ENCODE measurements at regions of chr9 and their contacts with region 1.

Region 1: GRCh38 chr9:78296893-78297671 is at the start of gene PSAT1:
- DNase-seq: peak; percentile 90 to 91
- H3K4me3 ChIP-seq: peak within 1 kb of the TSS; percentile 87 to 93 (median 90)
- H3K27ac ChIP-seq: peak within 1 kb of the TSS; percentile 94
- H3K4me1 ChIP-seq: peaks cover 8 to 16% (median 12%) of the 10 kb centered on the region in 4 experiments; a peak in 6 of 7 replicates
- H3K27me3 ChIP-seq: no peaks in the 10 kb centered on the region
- CTCF ChIP-seq: no peak
- EP300 ChIP-seq: no peak
- POLR2A ChIP-seq: peak; percentile 95 to 98
- RAD21 ChIP-seq: no peak
- total RNA-seq, gene PSAT1: 317 and 341 TPM in 2 replicates

Region 2: GRCh38 chr9:78035383-78035993 is 261.6 kb before region 1 on chr9:
- CTCF ChIA-PET with region 1: no interaction called
- POLR2A ChIA-PET with region 1: interaction called, 10 read pairs
- DNase-seq: no peak
- H3K4me3 ChIP-seq: no peak overlapping the region
- H3K27ac ChIP-seq: no peak overlapping the region
- H3K4me1 ChIP-seq: peaks cover 0 to 5% (median 0%) of the 10 kb centered on the region in 4 experiments; a peak in 3 of 7 replicates
- H3K27me3 ChIP-seq: no peaks in the 10 kb centered on the region
- CTCF ChIP-seq: peak; percentile 16 to 76 (median 74)
- EP300 ChIP-seq: no peak
- POLR2A ChIP-seq: no peak
- RAD21 ChIP-seq: peak; percentile 79 to 88

Region 3: DNA sequence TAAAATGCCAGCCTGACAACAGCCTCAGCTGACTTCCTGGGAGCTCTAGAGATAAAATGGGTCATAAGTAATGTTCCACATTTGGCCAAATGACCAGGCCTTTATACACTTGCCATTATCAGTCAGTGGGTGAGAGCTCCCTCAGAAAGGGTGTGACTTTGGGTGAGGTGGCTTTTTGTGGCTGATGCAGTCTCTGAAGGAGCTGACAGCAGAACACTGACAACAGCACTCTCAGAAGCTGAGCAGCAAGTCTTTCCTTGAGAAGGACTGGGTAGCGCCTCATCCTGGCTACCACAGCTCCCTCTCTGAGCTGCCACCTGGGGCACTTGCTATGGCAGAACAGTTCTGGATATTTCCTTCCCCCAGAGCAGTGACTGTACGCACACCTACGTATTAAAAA is 243.5 kb before region 1 on chr9:
- CTCF ChIA-PET with region 1: no interaction called
- POLR2A ChIA-PET with region 1: no interaction called
- DNase-seq: no peak
- H3K4me3 ChIP-seq: no peak overlapping the region
- H3K27ac ChIP-seq: no peak overlapping the region
- H3K4me1 ChIP-seq: no peaks in the 10 kb centered on the region
- H3K27me3 ChIP-seq: no peaks in the 10 kb centered on the region
- CTCF ChIP-seq: no peak
- EP300 ChIP-seq: no peak
- POLR2A ChIP-seq: no peak
- RAD21 ChIP-seq: no peak

Region 4: GRCh38 chr9:78248635-78249034 is 48.4 kb before region 1 on chr9:
- CTCF ChIA-PET with region 1: no interaction called
- POLR2A ChIA-PET with region 1: interaction called, 10 read pairs
- DNase-seq: no peak
- H3K4me3 ChIP-seq: no peak overlapping the region
- H3K27ac ChIP-seq: no peak overlapping the region
- H3K4me1 ChIP-seq: no peaks in the 10 kb centered on the region
- H3K27me3 ChIP-seq: no peaks in the 10 kb centered on the region
- CTCF ChIP-seq: no peak
- EP300 ChIP-seq: no peak
- POLR2A ChIP-seq: no peak
- RAD21 ChIP-seq: no peak

Region 5: DNA sequence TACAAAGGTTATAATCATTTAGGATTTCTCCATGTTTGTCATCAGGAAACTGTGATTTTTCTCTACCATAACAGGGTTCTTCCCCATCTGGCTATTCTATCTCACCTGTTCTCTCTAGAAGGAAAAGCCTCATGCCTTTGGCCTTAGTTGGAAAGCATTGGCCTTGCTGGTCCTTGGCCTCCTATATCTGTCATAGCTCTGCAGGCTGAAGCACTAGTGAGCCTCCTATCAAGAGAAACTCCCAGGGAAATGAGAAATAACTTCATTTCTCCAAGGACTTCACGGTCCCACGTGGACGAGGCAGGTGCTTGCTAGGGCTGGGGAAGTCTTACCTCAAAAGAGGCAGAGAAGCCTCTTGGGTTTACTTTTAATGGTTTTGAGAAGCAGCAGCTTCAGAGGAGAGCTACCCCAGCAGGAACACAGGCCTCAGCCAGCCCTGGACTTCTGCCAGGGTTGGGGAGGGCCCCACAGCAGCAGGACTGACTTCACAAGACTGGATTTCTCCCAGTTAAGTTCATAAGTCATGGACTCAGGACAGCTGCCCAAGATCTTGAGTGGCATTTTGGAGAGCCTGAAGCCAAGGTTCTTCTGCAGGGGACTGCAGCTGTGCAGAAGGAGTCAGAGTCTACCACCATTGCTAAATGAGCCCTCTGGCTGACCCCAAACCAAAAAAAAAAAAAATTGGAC is 16.0 kb before region 1 on chr9:
- CTCF ChIA-PET with region 1: interaction called, 21 read pairs
- POLR2A ChIA-PET with region 1: interaction called, 522 read pairs
- DNase-seq: no peak
- H3K4me3 ChIP-seq: no peak overlapping the region
- H3K27ac ChIP-seq: no peak overlapping the region
- H3K4me1 ChIP-seq: no peaks in the 10 kb centered on the region
- H3K27me3 ChIP-seq: no peaks in the 10 kb centered on the region
- CTCF ChIP-seq: no peak
- EP300 ChIP-seq: no peak
- POLR2A ChIP-seq: no peak
- RAD21 ChIP-seq: no peak

Region 6: GRCh38 chr9:78314953-78315870 is 18.1 kb after region 1 on chr9:
- CTCF ChIA-PET with region 1: interaction called, 7 read pairs
- POLR2A ChIA-PET with region 1: interaction called, 936 read pairs
- DNase-seq: peak in 1 of 2 experiments; percentile 35
- H3K4me3 ChIP-seq: no peak overlapping the region
- H3K27ac ChIP-seq: no peak overlapping the region; the same call in 1 of the 2 replicates
- H3K4me1 ChIP-seq: no peaks in the 10 kb centered on the region
- H3K27me3 ChIP-seq: no peaks in the 10 kb centered on the region
- CTCF ChIP-seq: no peak
- EP300 ChIP-seq: no peak
- POLR2A ChIP-seq: peak in 1 of 2 experiments; percentile 28; a peak in 1 of 3 replicates
- RAD21 ChIP-seq: no peak

Region 7: GRCh38 chr9:78369639-78370219 is 72.6 kb after region 1 on chr9:
- CTCF ChIA-PET with region 1: interaction called, 6 read pairs
- POLR2A ChIA-PET with region 1: interaction called, 17 read pairs
- DNase-seq: peak; percentile 54 to 93
- H3K4me3 ChIP-seq: no peak overlapping the region
- H3K27ac ChIP-seq: no peak overlapping the region
- H3K4me1 ChIP-seq: peaks cover 0 to 7% (median 0%) of the 10 kb centered on the region in 4 experiments; a peak in 1 of 7 replicates
- H3K27me3 ChIP-seq: no peaks in the 10 kb centered on the region
- CTCF ChIP-seq: peak; percentile 90 to 98 (median 98)
- EP300 ChIP-seq: no peak
- POLR2A ChIP-seq: no peak
- RAD21 ChIP-seq: peak; percentile 78 to 85

Measured in H1 (cell line).